Motor neuron (in vitro differentiated cells): ENCODE measurements at regions of chr1 and their contacts with region 1.

Region 1: GRCh38 chr1:236489710-236490377 is 33.9 kb upstream of the LGALS8 start:
- ATAC-seq: peak in 7 of 8 experiments; percentile 42 to 87 (median 64)
- H3K4me3 ChIP-seq: no peak overlapping the region
- H3K27ac ChIP-seq: no peak overlapping the region
- H3K4me1 ChIP-seq: peaks cover 4 to 8% of the 10 kb centered on the region in 2 donors

Region 2: DNA sequence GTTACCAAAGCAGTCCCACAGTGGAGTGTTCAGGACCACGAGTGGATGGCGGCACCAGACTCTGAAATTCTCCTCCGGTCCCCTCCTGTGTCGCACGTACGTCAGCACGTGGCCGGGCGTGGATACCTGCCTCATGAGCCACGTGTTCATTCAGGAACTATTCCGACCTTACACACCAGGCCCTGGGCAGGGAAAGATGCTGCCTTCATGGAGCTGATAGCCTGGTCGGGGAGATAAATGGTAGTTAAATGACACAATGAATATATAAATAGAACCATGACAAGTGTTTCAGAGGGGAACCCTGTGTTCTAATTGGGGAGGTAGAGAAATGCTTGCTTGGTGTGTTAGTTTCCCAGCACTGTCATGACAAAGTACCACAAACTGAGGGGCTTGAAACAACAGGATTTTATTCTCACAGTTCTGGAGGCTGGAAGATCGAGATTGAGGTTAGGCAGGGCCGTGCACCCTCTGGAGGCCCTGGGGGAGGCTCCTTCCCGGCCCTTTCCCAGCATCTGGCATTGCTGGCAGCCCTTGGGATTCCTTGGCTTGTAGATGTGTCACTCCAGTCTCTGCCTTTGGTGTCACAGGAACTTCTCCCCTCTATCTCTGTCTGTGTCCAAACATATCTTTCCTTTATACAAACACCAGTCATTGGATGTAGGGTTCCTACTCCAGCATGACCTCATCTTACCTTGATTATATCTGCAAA is 376.4 kb before region 1 on chr1:
- in situ Hi-C with region 1: loop called (anchors 10 to 25 kb)
- ATAC-seq: peak in 1 of 8 experiments; percentile 13
- H3K4me3 ChIP-seq: no peak overlapping the region
- H3K27ac ChIP-seq: no peak overlapping the region
- H3K4me1 ChIP-seq: no peaks in the 10 kb centered on the region

Region 3: DNA sequence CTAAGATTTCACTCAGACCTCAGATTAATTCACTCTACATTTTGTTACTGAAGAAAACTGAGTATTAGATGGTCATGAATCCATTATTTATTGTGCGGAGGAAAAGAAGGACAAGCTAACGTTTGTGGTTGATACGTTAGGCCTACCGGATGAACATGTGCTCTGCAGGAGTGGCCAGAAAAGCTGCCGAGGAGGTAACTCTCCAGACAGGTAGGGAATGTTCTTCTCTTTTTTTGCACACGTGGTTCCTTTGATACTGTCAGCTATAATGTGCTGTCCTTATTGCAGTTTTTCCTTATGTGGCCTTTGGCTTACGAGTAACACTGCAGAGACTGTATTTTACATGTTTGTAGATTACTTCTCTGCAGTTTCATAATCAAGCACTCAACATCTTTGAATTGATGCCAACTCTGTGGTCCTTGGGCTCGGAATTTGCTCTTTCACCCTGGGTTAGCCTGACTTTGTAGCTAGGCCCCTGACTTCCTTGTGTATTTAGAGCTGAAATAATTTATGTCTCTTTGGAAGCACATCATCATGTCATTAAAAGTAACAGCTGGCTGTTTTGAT is 318.8 kb after region 1 on chr1:
- in situ Hi-C with region 1: no loop called
- ATAC-seq: no peak
- H3K4me3 ChIP-seq: no peak overlapping the region
- H3K27ac ChIP-seq: no peak overlapping the region
- H3K4me1 ChIP-seq: no peaks in the 10 kb centered on the region